K562 (cell line): ENCODE measurements at regions of chr22 and their contacts with region 1.

Region 1: GRCh38 chr22:41411021-41411851 is 29.5 kb downstream of the TEF start:
- DNase-seq: no peak
- ATAC-seq: no peak
- H3K4me3 ChIP-seq: no peak overlapping the region
- H3K27ac ChIP-seq: no peak overlapping the region; the same call in 2 of the 3 replicates
- H3K4me1 ChIP-seq: peaks cover 15 to 29% of the 10 kb centered on the region in 2 experiments; a peak in 4 of 5 replicates
- H3K27me3 ChIP-seq: no peaks in the 10 kb centered on the region
- CTCF ChIP-seq: no peak
- EP300 ChIP-seq: no peak
- POLR2A ChIP-seq: no peak
- RAD21 ChIP-seq: no peak

Region 2: DNA sequence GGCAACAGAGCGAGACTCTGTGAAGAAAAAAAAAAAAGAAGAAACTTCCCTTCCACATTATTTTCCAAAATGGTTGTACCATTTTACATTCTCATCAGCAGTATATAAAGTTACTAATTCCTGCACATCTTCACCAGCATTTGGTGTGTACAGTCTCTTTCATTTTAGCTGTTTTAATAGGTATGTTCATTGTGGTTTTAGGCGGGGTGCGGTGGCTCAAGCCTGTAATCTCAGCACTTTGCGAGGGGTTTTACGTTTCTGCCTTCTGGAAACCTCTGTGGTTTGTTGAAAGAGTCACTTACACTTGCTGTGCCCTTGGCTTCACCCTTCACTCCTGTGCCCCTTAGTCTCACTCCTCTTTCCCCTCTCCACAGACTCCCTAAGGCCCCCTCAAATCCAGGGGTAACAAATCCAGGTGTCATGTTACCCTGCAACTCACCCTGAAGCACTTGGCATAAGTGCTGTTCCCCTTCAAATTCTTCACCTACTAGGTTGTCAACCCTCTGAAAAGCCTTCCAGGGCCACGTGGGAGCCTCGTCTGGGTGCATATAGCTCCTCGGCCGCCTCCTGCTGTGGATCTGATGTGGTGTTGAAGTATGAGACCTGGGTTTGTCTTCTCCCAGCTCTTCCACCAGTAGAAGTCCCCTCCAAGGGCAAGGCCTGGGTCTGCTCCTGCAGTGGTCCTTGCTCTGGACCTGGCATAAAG is 14.6 kb after region 1 on chr22:
- CTCF ChIA-PET with region 1: no interaction called
- POLR2A ChIA-PET with region 1: no interaction called
- in situ Hi-C with region 1: no loop called
- intact Hi-C with region 1: no loop called
- DNase-seq: no peak
- ATAC-seq: no peak; the same call in 2 of the 3 replicates
- H3K4me3 ChIP-seq: no peak overlapping the region
- H3K27ac ChIP-seq: no peak overlapping the region
- H3K4me1 ChIP-seq: no peaks in the 10 kb centered on the region; a peak in 1 of 5 replicates
- H3K27me3 ChIP-seq: no peaks in the 10 kb centered on the region
- CTCF ChIP-seq: no peak
- EP300 ChIP-seq: no peak
- POLR2A ChIP-seq: no peak
- RAD21 ChIP-seq: no peak

Region 3: DNA sequence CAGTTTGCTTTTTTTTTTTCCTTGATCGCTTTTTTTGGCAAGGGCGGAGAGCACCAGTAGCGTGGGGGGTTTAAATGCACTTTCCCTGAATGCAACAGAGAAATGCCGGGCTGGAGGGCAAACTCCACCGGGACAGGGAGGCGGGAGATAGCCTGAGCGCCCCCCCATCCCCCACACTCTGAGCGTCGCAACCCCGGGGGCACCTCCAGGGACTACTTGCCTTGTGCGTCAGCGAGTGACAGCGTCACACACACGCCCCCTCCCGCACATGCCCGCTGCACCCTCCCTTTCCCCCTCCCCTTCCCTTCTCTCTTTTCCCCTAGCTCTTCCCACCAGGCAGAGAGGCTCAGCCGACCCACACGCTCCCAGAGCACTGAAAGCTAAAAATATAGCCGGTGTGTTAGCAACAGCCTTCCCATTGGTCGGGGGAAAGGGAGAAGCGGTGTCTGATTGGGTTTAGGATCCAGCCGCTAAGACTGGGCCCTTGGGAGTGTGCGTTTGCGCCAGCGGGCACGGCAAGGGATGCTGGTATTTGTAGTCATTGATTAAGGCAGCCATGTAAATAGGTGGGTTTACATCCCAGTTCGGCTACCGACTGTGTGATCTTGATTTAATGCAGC is 37.1 kb after region 1 on chr22:
- CTCF ChIA-PET with region 1: no interaction called
- POLR2A ChIA-PET with region 1: interaction called, 13 read pairs
- in situ Hi-C with region 1: no loop called
- intact Hi-C with region 1: no loop called
- DNase-seq: peak; percentile 62 to 94 (median 76)
- ATAC-seq: peak; percentile 82
- H3K4me3 ChIP-seq: peak overlapping the region; percentile 92
- H3K27ac ChIP-seq: peak overlapping the region; percentile 94
- H3K4me1 ChIP-seq: peaks cover 6 to 26% of the 10 kb centered on the region in 2 experiments; a peak in 4 of 5 replicates
- H3K27me3 ChIP-seq: no peaks in the 10 kb centered on the region
- CTCF ChIP-seq: no peak
- EP300 ChIP-seq: no peak
- POLR2A ChIP-seq: peak; percentile 63
- RAD21 ChIP-seq: no peak

Region 4: DNA sequence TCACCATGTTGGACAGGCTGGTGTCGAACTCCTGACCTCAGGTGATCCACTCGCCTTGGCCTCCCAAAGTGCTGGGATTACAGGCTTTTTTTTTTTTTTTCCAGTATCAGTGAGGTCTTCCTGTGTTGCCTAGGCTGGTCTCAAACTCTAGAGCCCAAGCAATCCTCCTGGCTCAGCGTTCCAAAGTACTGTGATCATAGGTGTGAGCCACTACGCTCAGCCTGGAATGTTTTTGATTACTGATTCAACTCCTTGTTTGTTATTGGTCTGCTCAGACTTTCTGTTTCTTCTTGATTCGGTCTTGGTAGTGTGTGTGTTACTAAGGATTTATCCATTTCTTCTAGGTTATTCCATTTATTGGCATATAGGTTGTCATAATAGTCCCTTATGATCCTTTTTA is 628.0 kb after region 1 on chr22:
- CTCF ChIA-PET with region 1: no interaction called
- POLR2A ChIA-PET with region 1: no interaction called
- in situ Hi-C with region 1: no loop called
- intact Hi-C with region 1: no loop called
- DNase-seq: no peak
- ATAC-seq: no peak
- H3K4me3 ChIP-seq: no peak overlapping the region
- H3K27ac ChIP-seq: no peak overlapping the region
- H3K4me1 ChIP-seq: no peaks in the 10 kb centered on the region
- H3K27me3 ChIP-seq: no peaks in the 10 kb centered on the region
- CTCF ChIP-seq: no peak
- EP300 ChIP-seq: no peak
- POLR2A ChIP-seq: no peak
- RAD21 ChIP-seq: no peak